Activated T-helper 1 cell treated with anti-CD3 and anti-CD28 coated beads, Interleukin-12 subunit alpha, Interleukin-12 subunit beta, Interleukin-2, Interleukin-4 antibody, amounts not matched to agents 30 ng/mL and 10 ng/mL and 1 ng/mL, durations not matched to agents 14 hours and 24 hours and 36 hours (primary cell): ENCODE measurements at regions of chr21 and their contacts with region 1.

Region 1: GRCh38 chr21:42233067-42233961 is 14.4 kb downstream of the ABCG1 start:
- DNase-seq: peak; percentile 76
- H3K4me3 Mint-ChIP-seq: peak overlapping the region; percentile 73
- H3K27ac Mint-ChIP-seq: peak overlapping the region; percentile 92
- H3K4me1 Mint-ChIP-seq: peaks cover 96% of the 10 kb centered on the region
- H3K27me3 Mint-ChIP-seq: no peaks in the 10 kb centered on the region

Region 2: GRCh38 chr21:42062236-42063022 is 170.9 kb before region 1 on chr21:
- intact Hi-C with region 1: loop called (anchors 5 kb)
- DNase-seq: peak; percentile 70
- H3K4me3 Mint-ChIP-seq: peak overlapping the region; percentile 64
- H3K27ac Mint-ChIP-seq: peak overlapping the region; percentile 73
- H3K4me1 Mint-ChIP-seq: peaks cover 40% of the 10 kb centered on the region
- H3K27me3 Mint-ChIP-seq: peaks cover 8% of the 10 kb centered on the region

Region 3: DNA sequence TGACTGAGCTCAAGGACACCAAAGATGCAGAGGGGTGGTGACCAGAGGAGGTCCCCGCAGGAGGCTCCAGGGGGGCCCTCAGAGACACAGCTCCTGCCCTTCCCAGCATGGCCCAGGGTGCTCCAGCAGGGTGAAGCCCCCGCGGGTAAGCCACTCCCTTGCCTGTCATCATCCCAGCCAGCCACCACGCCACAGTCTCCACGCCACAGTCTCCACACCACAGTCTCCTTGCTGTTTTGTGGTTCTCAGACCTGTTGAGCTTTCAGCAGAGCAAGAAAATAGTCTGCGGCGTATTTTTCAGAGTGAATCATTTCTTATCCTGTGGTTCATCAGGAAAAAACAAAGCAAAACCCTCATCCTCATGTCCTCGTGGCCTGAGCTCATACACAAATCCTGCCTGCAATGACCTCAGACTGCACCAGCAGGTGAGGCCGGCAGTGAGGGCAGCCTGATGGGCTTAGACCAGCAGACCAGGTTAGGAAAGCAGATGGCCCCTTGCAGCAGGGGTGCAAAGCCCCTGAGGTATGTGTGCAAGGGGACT is 40.1 kb before region 1 on chr21:
- intact Hi-C with region 1: loop called (anchors 1 kb)
- DNase-seq: peak; percentile 75
- H3K4me3 Mint-ChIP-seq: peak overlapping the region; percentile 72
- H3K27ac Mint-ChIP-seq: peak overlapping the region; percentile 87
- H3K4me1 Mint-ChIP-seq: peaks cover 63% of the 10 kb centered on the region
- H3K27me3 Mint-ChIP-seq: peaks cover 4% of the 10 kb centered on the region

Region 4: GRCh38 chr21:42209819-42210479 is 23.4 kb before region 1 on chr21:
- intact Hi-C with region 1: no loop called
- DNase-seq: no peak
- H3K4me3 Mint-ChIP-seq: no peak overlapping the region
- H3K27ac Mint-ChIP-seq: no peak overlapping the region
- H3K4me1 Mint-ChIP-seq: no peaks in the 10 kb centered on the region
- H3K27me3 Mint-ChIP-seq: peaks cover 21% of the 10 kb centered on the region

Region 5: DNA sequence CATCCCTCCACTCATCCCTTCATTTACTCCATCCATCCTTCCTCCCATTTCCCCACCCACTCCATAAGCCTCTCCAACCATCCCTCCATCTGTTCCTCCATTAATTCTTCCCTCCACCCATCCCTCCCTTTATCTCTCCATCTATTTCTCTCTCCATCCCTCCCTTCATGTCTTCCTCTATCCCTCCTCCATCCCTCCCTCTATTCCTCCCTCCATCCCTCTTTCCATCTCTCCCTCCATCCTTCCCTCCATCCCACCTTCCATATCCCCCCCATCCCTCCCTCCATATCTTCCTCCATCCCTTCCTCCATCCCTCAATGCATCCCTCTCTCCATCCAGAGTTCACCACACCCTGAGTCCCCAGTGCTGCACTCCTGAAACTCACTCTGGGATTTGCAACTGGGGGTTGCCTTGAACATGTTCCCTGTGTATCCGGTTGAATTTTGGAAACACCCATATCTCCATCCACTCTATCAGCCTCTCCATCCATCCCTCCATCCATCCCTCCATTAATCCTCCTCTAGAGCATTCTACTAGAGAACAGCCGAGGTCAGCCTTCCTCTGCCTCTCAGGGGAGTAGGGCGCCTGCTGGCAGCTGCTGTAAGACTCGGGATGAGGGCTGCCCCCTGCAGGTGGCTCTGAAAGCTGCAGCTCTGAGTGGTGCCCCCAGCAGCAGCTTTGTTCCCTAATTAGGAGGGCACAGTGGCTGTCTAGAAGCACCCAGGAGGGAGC is 25.0 kb after region 1 on chr21:
- intact Hi-C with region 1: loop called (anchors 1 kb)
- DNase-seq: peak; percentile 63
- H3K4me3 Mint-ChIP-seq: no peak overlapping the region
- H3K27ac Mint-ChIP-seq: no peak overlapping the region
- H3K4me1 Mint-ChIP-seq: peaks cover 6% of the 10 kb centered on the region
- H3K27me3 Mint-ChIP-seq: peaks cover 4% of the 10 kb centered on the region

Region 6: DNA sequence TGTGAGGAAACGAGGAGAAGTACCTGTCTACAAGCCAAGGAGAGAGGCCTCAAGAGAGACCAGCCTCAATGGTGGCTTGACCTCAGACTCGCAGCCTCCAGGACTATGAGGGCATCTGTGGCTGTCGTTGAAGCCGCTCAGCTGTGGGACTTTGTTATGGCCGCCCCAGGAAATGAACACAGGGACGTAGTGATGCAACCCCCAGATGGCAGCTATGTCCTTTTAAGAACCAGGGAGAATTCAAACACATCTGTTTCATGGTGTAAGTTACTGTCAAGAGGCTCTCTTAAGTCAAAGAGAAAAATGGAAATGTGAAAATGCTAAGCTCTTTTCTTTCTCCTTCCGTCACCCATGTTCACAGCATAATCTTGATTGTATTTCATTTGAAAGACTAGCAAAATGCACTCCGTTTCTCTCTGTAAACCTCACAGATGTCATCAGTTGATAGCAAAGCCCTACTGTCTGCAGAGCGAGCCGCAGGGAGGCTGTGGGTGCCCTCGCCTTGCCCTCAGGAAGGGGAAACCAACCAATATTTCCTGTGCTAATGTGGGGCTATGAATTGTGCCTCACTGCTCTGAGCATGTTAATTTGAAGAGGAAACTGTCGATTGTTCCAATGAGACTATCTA is 191.7 kb after region 1 on chr21:
- intact Hi-C with region 1: loop called (anchors 2 kb)
- DNase-seq: peak; percentile 74
- H3K4me3 Mint-ChIP-seq: peak overlapping the region; percentile 76
- H3K27ac Mint-ChIP-seq: peak overlapping the region; percentile 95
- H3K4me1 Mint-ChIP-seq: peaks cover 67% of the 10 kb centered on the region
- H3K27me3 Mint-ChIP-seq: no peaks in the 10 kb centered on the region

Region 7: GRCh38 chr21:42524349-42525151 is 291.2 kb after region 1 on chr21:
- intact Hi-C with region 1: loop called (anchors 5 kb)
- DNase-seq: no peak
- H3K4me3 Mint-ChIP-seq: no peak overlapping the region
- H3K27ac Mint-ChIP-seq: no peak overlapping the region
- H3K4me1 Mint-ChIP-seq: peaks cover 49% of the 10 kb centered on the region
- H3K27me3 Mint-ChIP-seq: peaks cover 2% of the 10 kb centered on the region

Region 8: DNA sequence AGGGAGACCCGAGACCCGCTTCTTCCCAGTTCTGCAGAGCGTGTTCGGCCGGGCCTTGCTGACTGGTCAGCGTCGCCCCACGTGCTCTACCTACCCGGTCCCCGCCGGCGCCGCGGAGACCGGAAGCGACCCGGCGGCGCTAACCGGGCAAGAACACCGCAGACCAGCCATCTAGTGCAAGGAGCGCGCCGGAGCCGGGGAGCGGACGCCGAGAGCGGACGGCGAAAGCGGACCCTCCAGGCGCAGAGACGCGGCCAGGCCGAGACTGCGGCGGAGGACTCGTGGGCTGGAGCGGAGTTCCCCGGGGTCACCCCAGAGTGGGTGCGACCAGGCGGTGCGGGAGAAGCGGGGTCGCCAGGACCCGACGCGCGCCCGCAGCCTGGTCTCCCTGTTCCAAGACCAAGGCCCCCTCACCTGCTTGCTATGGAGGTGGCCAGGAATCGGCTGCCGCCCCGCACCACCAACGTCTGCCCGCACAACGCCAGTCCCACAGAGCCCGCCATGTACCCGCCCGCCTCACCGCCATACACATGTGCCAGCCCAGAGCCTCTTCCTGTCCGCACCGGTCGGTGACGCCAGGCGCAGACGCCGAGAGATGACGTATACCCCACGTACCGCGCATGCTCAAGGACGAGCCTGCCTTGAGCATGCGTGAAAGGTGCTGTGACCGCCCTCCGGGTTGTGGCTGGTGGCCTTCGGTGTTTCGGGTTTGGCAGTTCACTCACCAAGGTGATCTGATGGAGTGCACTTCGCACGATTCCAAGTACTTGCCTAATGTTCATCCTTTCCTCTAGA is 645.9 kb after region 1 on chr21 and contains the start of gene WDR4:
- intact Hi-C with region 1: loop called (anchors 1 kb)
- DNase-seq: peak; percentile 99
- H3K4me3 Mint-ChIP-seq: peak within 1 kb of the TSS; percentile 98
- H3K27ac Mint-ChIP-seq: peak within 1 kb of the TSS; percentile 98
- H3K4me1 Mint-ChIP-seq: peaks cover 26% of the 10 kb centered on the region
- H3K27me3 Mint-ChIP-seq: no peaks in the 10 kb centered on the region
- total RNA-seq, gene WDR4: 73.2 and 74.2 TPM in 2 replicates

Region 9: GRCh38 chr21:43277481-43278351 is 1044.4 kb after region 1 on chr21:
- intact Hi-C with region 1: no loop called
- DNase-seq: no peak
- H3K4me3 Mint-ChIP-seq: no peak overlapping the region
- H3K27ac Mint-ChIP-seq: no peak overlapping the region
- H3K4me1 Mint-ChIP-seq: no peaks in the 10 kb centered on the region
- H3K27me3 Mint-ChIP-seq: peaks cover 4% of the 10 kb centered on the region